ENCODE measurements at regions of chr9 and their contacts with region 1.

Region 1: DNA sequence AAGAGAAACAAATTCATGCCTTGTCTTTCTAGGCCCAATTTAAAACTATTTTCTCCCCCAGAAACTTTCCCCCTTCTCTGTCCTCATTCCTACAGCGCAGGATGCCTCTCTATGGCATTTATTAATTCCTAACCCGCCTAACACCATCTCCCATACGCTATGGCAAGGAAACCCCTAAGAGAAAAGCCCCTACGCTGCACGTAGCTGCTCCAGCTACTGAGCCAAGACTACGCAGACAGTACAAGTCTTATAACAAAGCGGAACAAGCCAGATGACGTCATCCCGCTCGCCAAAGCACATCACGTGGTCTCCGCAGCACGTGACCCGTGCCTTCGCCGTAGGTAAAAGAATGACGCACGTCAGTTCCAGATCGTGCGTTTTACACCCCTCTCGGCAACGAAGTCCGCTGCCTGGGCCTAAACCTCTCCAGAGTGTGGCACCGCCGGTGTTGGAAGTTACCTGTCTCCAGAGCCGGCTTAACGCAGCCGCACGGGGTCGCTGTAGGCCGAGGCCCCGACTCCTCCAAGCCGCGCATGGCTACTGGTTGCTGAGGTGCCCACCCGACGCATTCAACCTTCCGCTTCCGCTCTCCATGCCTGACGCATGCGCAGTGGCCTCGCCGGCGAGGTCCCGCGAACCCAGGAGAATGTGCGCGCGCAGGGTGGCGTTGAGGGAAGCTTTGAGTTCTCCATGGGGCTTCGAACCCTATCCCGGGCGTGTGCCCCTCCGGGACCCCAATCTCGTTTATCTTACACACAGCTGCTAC is at the start of gene TRMO:
- H3K4me3 Mint-ChIP-seq: peak within 1 kb of the TSS; percentile 95
- H3K27ac Mint-ChIP-seq: peak within 1 kb of the TSS; percentile 99
- H3K4me1 Mint-ChIP-seq: peaks cover 44% of the 10 kb centered on the region
- H3K27me3 Mint-ChIP-seq: no peaks in the 10 kb centered on the region

Region 2: GRCh38 chr9:97696803-97697601 is 225.1 kb before region 1 on chr9 and contains the start of gene XPA:
- intact Hi-C with region 1: loop called (anchors 5 kb)
- H3K4me3 Mint-ChIP-seq: peak within 1 kb of the TSS; percentile 91
- H3K27ac Mint-ChIP-seq: peak within 1 kb of the TSS; percentile 95
- H3K4me1 Mint-ChIP-seq: peaks cover 48% of the 10 kb centered on the region
- H3K27me3 Mint-ChIP-seq: peaks cover 23% of the 10 kb centered on the region

Region 3: GRCh38 chr9:97982683-97983588 is 60.8 kb after region 1 on chr9 and contains the start of gene ANP32B:
- intact Hi-C with region 1: loop called (anchors 2 kb)
- H3K4me3 Mint-ChIP-seq: peak within 1 kb of the TSS; percentile 91
- H3K27ac Mint-ChIP-seq: peak within 1 kb of the TSS; percentile 96
- H3K4me1 Mint-ChIP-seq: peaks cover 29% of the 10 kb centered on the region
- H3K27me3 Mint-ChIP-seq: peaks cover 14% of the 10 kb centered on the region

Region 4: DNA sequence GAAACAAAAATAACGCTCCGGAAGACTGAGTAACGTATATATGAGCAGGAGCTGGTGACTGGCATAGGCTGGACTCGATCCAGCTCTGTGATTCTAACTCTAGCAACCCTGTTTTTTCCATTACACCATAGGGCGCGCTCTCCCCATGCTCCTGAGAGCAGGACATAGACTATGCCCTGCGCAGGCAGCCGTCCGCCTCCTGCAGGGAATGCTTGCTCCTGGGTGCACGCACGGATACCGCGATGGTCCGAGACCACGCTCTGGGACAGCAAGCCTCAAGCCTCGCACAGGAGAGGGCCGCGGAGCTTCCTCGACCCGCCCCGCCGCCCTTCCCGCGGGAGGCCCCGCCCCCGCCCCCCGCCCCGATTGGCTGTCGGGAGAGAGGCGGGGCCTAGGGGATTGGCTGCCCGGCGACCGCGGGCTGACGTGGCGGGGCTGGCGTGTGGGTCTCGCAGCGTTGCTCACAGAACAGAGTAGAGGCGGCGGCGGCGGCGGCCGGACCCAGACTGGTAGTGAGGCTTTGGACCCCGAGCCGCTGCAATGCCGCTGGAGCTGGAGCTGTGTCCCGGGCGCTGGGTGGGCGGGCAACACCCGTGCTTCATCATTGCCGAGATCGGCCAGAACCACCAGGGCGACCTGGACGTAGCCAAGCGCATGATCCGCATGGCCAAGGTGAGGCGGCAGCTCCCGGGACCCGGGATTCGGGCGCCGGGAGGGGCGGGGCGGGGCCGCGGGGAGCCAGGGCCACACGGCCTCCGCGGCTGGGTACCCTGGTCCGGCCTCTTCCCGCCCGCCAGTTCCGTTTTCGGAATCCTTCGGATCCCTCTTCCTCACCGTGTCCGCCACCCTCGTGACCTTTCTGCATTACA is 134.4 kb after region 1 on chr9 and contains the start of gene NANS:
- intact Hi-C with region 1: loop called (anchors 1 kb)
- H3K4me3 Mint-ChIP-seq: peak within 1 kb of the TSS; percentile 93
- H3K27ac Mint-ChIP-seq: peak within 1 kb of the TSS; percentile 96
- H3K4me1 Mint-ChIP-seq: peaks cover 30% of the 10 kb centered on the region
- H3K27me3 Mint-ChIP-seq: no peaks in the 10 kb centered on the region

Region 5: DNA sequence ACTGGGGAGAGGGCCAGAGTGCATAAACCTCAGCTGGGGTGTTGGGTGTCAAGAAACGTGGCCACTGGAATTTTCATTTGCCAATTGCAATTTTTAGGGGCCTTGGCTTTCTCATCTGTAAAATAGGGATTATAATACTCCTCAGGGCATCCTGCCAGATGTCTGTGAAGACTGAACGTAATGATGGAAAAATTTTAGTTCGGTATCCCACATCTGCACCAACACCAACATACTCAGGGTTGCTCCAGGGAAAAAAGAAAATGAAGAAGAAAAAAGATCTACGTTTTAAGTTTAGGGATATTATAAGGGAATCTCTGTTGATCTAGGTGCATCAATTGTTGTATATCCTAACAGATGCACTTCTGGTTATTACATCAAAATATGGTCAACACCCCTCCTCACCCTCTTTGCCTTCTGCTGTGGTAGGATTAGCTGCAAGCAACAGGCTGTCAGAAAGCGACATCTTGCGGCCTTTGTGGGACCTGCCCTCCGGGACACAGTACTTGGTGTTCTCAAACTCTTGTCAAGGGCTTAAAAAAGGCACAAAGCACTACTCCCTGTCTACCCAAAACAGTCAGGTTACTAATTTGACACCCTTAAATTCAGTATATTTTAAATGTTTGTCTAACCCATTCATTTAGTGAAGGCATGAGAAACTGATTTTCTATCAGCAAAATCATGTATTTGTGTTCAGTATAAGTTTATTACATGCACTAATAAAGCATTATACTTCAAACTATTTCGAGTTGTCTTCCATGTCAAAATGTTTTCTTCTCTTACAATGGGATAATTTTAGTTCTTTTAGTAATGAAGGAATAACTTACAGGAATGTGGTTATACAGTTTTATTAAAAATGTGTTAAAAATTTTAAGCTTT is 341.6 kb after region 1 on chr9:
- intact Hi-C with region 1: loop called (anchors 2 kb)
- H3K4me3 Mint-ChIP-seq: no peak overlapping the region
- H3K27ac Mint-ChIP-seq: no peak overlapping the region
- H3K4me1 Mint-ChIP-seq: no peaks in the 10 kb centered on the region
- H3K27me3 Mint-ChIP-seq: peaks cover 3% of the 10 kb centered on the region